H1 (cell line): ENCODE measurements at regions of chr6 and their contacts with region 1.

Region 1: DNA sequence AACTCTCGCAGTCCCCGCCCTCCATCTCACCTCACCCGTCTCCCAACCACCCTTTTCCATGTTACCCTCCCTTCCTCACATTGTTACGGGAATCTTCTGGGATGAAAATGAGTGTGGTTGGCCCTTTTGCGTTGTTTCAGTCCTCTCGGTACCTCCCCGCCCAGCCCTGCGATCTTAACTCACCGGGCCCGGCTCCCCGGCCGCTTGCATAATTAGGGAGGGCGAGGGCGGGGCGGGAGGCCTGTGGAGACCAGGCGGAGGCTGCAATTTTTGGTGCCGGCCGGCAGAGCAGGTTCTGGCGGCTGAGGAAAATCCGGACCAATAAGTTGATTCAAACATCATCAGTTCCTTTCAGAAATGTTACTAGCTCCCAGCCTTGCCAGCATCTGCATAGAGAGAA is 25.2 kb downstream of the TFAP2B start:
- DNase-seq: peak in 1 of 2 experiments; percentile 78
- H3K4me3 ChIP-seq: peak overlapping the region in 1 of 4 experiments; percentile 53; a peak in 2 of 8 replicates
- H3K27ac ChIP-seq: no peak overlapping the region
- H3K4me1 ChIP-seq: peaks cover 3 to 26% (median 17%) of the 10 kb centered on the region in 4 experiments
- H3K27me3 ChIP-seq: peaks cover 73 to 100% (median 89%) of the 10 kb centered on the region in 4 experiments
- CTCF ChIP-seq: peak in 1 of 3 experiments; percentile 6; a peak in 1 of 4 replicates
- EP300 ChIP-seq: 0 out of 3 replicates have a peak, but pooled peaks of 1 of the 2 experiments have one; percentile 18
- POLR2A ChIP-seq: no peak
- RAD21 ChIP-seq: peak in 1 of 2 experiments; percentile 16; a peak in 1 of 4 replicates

Region 2: GRCh38 chr6:50816115-50816675 is 27.6 kb before region 1 on chr6:
- CTCF ChIA-PET with region 1: interaction called, 11 read pairs
- POLR2A ChIA-PET with region 1: interaction called, 3 read pairs
- DNase-seq: peak in 1 of 2 experiments; percentile 84
- H3K4me3 ChIP-seq: peak overlapping the region in 3 of 4 experiments; percentile 4 to 64 (median 10); a peak in 3 of 8 replicates
- H3K27ac ChIP-seq: no peak overlapping the region
- H3K4me1 ChIP-seq: peaks cover 0 to 9% (median 2%) of the 10 kb centered on the region in 4 experiments; a peak in 3 of 7 replicates
- H3K27me3 ChIP-seq: peaks cover 35 to 60% (median 47%) of the 10 kb centered on the region in 4 experiments
- CTCF ChIP-seq: peak; percentile 64 to 77 (median 70)
- EP300 ChIP-seq: no peak
- POLR2A ChIP-seq: no peak
- RAD21 ChIP-seq: peak; percentile 95 to 96

Region 3: DNA sequence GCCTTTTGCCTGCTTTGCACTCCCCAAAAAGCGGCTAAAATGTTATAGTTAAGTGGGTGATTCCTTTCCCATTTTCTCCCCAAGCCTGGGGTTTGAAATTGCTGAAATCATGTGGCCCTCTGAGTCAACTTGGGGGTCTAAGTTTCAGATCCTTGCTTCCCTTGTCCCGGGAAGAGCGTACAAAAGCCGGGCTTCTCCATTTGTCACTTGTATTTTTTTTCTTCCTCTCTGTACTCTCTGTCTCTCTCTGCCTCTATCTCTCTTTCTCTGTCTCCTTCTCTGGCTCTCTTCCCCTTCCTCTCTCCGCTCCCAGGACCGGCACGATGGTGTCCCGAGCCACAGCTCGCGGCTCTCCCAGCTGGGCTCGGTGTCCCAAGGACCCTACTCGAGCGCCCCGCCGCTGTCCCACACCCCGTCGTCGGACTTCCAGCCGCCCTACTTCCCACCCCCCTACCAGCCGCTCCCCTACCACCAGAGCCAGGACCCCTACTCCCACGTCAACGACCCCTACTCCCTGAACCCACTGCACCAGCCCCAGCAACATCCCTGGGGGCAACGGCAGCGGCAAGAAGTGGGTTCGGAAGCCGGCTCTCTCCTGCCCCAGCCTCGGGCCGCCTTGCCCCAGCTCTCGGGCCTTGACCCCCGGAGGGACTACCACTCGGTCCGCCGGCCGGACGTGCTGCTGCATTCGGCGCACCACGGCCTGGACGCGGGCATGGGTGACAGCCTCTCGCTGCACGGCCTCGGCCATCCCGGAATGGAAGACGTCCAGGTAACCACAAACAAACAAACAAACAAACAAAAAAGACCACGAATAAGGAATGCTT is 20.5 kb before region 1 on chr6:
- CTCF ChIA-PET with region 1: interaction called, 8 read pairs
- POLR2A ChIA-PET with region 1: interaction called, 13 read pairs
- DNase-seq: no peak
- H3K4me3 ChIP-seq: peak overlapping the region in 2 of 4 experiments; percentile 7 to 46; a peak in 4 of 8 replicates
- H3K27ac ChIP-seq: no peak overlapping the region
- H3K4me1 ChIP-seq: peaks cover 15 to 36% (median 26%) of the 10 kb centered on the region in 4 experiments
- H3K27me3 ChIP-seq: peaks cover 76 to 97% (median 91%) of the 10 kb centered on the region in 4 experiments
- CTCF ChIP-seq: no peak
- EP300 ChIP-seq: no peak
- POLR2A ChIP-seq: no peak
- RAD21 ChIP-seq: no peak

Region 4: DNA sequence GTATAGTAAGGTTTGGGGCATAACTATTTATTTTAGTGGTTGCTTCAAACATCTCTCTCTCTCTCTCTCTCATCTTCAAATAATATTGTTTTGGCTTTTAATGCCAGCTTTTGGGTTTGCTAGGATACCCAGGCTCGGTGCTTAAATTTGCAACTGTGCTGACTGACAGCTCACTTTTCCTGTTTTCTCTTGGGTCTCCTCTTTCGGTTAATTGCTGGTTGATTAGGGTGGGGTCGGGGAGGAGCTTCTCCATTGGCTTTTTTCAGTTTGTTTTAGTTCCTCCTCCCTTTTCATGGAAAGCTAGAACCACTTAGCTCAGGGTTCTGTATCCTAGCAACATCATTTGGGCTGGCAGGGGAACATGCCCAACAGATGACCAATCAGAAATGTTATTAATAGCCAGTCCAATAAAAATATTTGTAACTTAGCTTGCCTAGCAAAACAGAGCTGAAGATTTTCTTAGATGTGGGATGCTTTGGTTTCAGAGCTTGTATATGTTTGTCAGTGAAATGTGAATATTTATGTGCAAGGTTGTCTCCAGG is 13.9 kb before region 1 on chr6:
- CTCF ChIA-PET with region 1: interaction called, 10 read pairs
- POLR2A ChIA-PET with region 1: interaction called, 13 read pairs
- DNase-seq: no peak
- H3K4me3 ChIP-seq: no peak overlapping the region
- H3K27ac ChIP-seq: no peak overlapping the region
- H3K4me1 ChIP-seq: peaks cover 8 to 18% (median 11%) of the 10 kb centered on the region in 4 experiments
- H3K27me3 ChIP-seq: peaks cover 58 to 96% (median 78%) of the 10 kb centered on the region in 4 experiments
- CTCF ChIP-seq: no peak
- EP300 ChIP-seq: no peak
- POLR2A ChIP-seq: no peak
- RAD21 ChIP-seq: no peak